ENCODE measurements at regions of chr3 and their contacts with region 1.

Region 1: DNA sequence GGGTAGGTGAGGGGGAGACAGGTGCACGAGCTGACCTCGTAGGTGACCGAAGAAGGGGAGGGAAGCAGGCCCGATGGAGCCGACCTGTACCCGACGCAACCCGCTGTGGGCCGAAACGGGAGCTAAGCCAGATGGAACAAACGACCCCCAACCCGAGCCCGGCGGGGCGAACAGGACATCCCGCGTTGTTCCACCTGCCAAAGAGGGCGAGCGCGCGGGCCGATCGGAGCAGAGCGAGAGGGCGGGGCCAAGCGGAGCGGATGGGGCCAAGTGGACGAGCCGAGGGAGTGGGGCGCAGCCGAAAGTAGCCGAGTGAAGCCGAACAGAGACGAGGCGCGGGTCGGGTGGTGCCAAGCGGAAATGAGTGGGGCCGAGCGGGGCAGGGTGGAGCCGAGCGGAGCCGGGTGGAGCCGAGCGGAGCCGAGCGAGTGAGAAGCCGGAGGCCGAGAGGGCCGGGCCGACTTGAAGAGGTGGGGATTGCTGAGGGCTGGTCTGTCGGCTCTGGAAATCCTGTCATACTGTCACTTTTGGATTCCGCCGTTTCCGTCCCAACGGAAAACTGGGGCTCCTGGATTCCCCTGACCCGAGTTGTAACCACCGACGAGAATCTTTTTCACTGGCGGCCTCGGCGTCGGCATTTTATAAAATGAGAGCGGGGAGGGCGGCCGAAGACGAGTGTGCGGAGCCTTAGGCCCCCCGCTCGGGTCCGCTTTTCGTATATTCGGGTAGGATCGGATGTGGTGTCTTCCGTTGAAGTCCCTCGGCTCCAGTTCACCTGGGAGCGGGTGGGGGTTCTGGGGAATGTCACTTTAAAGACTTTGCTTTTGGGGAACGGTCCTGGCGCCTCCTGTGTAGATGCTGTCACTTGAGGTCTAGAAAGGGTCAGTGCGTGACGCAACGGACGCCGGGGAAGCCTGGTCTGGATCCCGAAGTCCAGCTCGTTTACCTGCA is 15.6 kb upstream of the WNT7A start:
- DNase-seq: peak; percentile 88 to 96 (median 92)
- ATAC-seq: peak; percentile 96
- H3K4me3 Mint-ChIP-seq: peak overlapping the region; percentile 82 to 95 (median 92)
- H3K27ac Mint-ChIP-seq: peak overlapping the region; percentile 85 to 97 (median 94)
- H3K4me1 Mint-ChIP-seq: peaks cover 21 to 38% (median 33%) of the 10 kb centered on the region in 4 donors
- H3K27me3 Mint-ChIP-seq: peaks cover 0 to 2% (median 0%) of the 10 kb centered on the region in 5 donors

Region 2: DNA sequence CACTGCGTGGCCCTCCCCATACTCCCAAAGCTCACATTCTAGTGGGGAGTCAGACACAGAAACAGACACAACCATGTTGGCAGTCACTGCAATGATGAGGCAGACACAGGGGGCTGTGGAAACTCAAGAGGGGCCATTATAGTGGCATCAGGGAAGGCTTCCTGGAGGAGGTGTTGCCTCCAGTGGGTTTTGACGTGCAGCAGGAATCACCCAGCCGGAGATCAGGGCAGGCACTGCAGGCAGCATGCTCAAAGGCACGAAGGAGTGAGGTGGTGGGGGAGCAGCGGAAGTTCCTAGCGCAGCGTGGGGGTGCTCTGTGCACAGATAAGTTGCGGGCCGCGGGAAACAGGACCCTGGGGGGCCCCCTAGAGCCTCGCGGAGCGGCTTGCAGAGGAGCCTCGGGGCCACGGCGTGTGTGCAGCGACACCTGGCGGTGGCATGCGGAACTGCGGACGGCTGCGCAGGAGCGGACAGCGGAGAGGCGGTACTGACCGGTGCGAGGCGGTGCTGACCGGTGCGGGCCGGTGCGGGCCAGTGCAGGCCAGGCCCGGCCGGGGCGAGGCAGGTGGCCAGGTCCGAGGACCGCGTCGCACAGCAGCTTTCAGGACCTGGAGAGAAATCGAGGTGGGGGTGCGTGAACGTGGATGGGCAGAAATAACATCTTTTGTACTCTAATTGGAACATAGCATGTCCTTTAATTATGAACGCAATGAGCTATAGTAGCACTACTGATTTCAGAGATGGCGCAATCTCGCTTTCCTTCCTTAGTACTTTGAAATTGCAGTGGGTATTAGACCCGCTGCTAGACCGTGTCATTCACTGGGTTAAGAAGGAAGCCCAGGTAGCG is 245.0 kb before region 1 on chr3:
- POLR2A ChIA-PET with region 1: interaction called, 10 read pairs
- DNase-seq: peak; percentile 78 to 93 (median 86)
- ATAC-seq: peak; percentile 89 to 92
- H3K4me3 Mint-ChIP-seq: peak overlapping the region; percentile 21 to 79 (median 63)
- H3K27ac Mint-ChIP-seq: peak overlapping the region; percentile 9 to 89 (median 68)
- H3K4me1 Mint-ChIP-seq: peaks cover 30 to 62% (median 49%) of the 10 kb centered on the region in 4 donors
- H3K27me3 Mint-ChIP-seq: peaks cover 10 to 22% (median 16%) of the 10 kb centered on the region in 5 donors

Region 3: GRCh38 chr3:13866041-13866965 is 29.1 kb before region 1 on chr3:
- POLR2A ChIA-PET with region 1: interaction called, 11 read pairs
- DNase-seq: peak; percentile 26 to 87 (median 67)
- ATAC-seq: peak; percentile 86 to 91
- H3K4me3 Mint-ChIP-seq: peak overlapping the region; percentile 65 to 82 (median 78)
- H3K27ac Mint-ChIP-seq: peak overlapping the region; percentile 81 to 99 (median 95)
- H3K4me1 Mint-ChIP-seq: peaks cover 30 to 72% (median 53%) of the 10 kb centered on the region in 4 donors
- H3K27me3 Mint-ChIP-seq: peaks cover 0 to 5% (median 0%) of the 10 kb centered on the region in 5 donors

Region 4: DNA sequence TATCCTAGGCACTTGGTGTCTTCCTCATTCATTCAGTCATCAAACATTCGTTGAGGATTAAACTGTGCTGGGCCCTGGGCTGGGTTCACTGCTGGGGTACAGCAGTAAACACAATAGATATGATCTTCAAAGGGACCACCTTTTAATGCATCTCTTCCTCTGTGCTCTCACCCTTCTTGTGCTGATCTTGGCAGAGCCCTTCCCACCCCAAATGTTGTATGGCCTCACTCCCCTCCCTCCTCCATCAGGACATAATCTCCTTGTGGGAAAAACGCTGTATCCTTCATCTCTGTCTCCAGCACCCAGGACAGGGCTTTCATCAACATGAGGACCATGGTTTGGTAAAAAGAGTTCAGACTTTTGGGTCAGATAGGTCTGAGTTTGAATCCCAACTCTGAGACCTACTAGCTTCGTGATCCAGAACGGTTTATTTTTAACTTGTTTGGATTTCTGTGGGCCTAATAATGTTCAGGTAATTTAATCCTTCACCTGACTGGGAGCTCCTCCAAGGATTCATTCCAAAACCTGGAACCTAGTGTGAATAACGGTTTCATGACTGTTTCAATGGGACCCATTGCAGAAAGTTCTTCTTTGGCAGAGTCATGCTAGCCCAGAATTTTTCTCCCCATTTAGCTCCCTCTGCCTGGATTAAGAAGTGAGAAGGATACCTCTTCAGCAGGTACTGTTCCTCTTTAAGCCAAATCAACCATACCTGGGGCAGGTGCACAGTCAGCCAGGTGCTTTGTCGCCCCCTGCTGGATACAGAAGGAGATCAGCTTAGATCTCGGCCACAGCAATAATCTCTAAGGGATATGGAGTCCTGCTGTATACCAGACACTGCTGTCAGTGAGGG is 10.4 kb before region 1 on chr3:
- POLR2A ChIA-PET with region 1: interaction called, 47 read pairs
- DNase-seq: peak; percentile 54 to 86 (median 72)
- ATAC-seq: peak; percentile 77 to 84
- H3K4me3 Mint-ChIP-seq: no peak overlapping the region
- H3K27ac Mint-ChIP-seq: peak overlapping the region in 2 of 10 donors; percentile 25 to 77
- H3K4me1 Mint-ChIP-seq: peaks cover 3 to 21% (median 12%) of the 10 kb centered on the region in 4 donors
- H3K27me3 Mint-ChIP-seq: peaks cover 10 to 49% (median 24%) of the 10 kb centered on the region in 5 donors

Region 5: DNA sequence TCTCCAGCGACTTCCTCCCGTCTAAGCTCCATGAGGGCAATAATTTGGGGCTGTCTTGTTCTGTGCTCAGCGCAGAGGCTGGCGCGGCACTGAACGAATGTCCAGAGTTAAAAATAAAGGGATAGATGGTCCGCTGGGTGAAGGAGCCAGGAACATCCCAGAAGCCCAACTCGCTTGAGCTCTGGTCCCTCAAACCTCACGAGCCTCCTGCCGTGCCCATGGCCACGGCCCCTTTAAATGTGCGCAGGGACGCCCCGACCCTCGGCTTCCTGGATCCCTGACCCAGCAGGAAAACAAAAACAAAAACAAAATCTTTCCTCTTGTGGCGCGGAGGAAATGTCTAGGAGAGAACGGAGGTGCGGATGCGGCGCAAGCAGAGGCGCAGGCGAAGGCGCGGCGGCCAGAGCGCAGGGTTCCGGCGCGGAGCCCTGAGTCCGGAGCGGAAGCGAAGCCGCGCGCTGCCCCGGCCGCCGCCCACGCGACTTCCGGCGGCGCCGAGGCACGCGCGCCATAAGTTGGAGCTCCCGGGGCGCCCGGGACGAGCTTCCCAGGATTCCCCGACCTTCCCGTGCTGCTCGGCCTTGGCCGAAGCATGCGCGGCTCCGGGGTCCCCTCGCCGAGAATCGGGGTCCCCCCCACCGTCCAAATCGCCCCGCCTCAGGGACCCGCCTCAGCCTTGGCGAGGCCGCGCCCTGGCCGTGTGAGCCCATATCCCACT is 37.3 kb after region 1 on chr3:
- POLR2A ChIA-PET with region 1: no interaction called
- DNase-seq: no peak
- ATAC-seq: peak in 1 of 2 donors; percentile 46
- H3K4me3 Mint-ChIP-seq: peak overlapping the region; percentile 55 to 86 (median 75)
- H3K27ac Mint-ChIP-seq: peak overlapping the region in 3 of 10 donors; percentile 37 to 80 (median 75)
- H3K4me1 Mint-ChIP-seq: peaks cover 3 to 5% (median 4%) of the 10 kb centered on the region in 4 donors
- H3K27me3 Mint-ChIP-seq: peaks cover 8 to 53% (median 28%) of the 10 kb centered on the region in 5 donors

Region 6: GRCh38 chr3:14124615-14125190 is 229.3 kb after region 1 on chr3 and contains the starts of genes CHCHD4 and TMEM43:
- POLR2A ChIA-PET with region 1: interaction called, 15 read pairs
- DNase-seq: peak; percentile 96 to 100 (median 98)
- ATAC-seq: peak; percentile 88 to 92
- H3K4me3 Mint-ChIP-seq: peak within 1 kb of the TSS; percentile 92 to 97 (median 95)
- H3K27ac Mint-ChIP-seq: peak within 1 kb of the TSS; percentile 87 to 98 (median 96)
- H3K4me1 Mint-ChIP-seq: peaks cover 37 to 76% (median 64%) of the 10 kb centered on the region in 4 donors
- H3K27me3 Mint-ChIP-seq: no peaks in the 10 kb centered on the region
- polyA plus RNA-seq, gene CHCHD4: 6.8 to 15.8 (median 11.5) TPM
- polyA plus RNA-seq, gene TMEM43: 45.6 to 65.0 (median 56.0) TPM

Region 7: DNA sequence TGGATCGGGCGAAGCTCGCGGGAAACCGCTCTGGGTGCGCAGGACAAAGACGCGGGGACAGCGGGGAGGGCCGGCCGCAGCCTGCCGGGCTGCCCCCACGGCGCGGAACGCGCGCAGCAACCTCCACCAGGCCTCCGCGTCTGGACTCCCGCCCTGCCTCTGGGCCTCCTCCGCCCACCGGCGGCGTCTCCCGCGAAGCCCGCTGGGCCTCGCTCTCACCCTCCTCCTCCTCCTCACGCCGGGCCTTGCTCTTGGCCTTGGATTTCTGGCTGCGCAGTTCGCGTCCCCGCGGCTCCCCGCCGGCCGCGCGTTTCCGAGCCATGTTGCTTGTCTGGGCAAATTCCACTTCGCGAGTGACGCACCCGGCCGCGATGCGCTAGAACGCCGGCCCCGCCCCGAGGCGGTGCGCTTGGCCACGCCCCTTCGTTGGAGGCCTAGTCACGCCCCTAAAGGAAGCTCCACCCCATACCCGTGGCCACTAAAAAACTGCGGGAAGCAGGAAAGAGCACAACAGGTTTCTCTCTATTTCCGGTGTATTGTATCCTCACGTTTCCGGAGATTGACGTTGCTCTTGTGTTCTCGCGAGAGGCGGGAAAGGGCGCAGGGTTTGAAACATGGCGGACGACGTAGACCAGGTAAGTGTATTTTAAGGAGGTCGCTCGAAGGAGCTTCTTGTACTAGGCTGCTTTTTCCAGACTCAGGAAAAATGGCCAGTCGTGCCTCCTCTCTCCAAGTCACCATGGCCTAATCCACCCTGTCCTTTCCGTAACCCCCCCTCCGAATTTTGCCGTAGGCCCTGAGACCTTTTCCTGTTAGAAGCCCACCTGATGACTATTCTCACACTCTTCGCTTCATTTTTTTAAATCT is 283.1 kb after region 1 on chr3 and contains the starts of genes LSM3 and XPC:
- POLR2A ChIA-PET with region 1: interaction called, 13 read pairs
- DNase-seq: peak; percentile 97 to 100 (median 98)
- ATAC-seq: peak; percentile 85 to 88
- H3K4me3 Mint-ChIP-seq: peak within 1 kb of the TSS; percentile 88 to 100 (median 98)
- H3K27ac Mint-ChIP-seq: peak within 1 kb of the TSS; percentile 97 to 100 (median 100)
- H3K4me1 Mint-ChIP-seq: peaks cover 32 to 75% (median 74%) of the 10 kb centered on the region in 4 donors
- H3K27me3 Mint-ChIP-seq: no peaks in the 10 kb centered on the region
- polyA plus RNA-seq, gene LSM3: 20.8 to 26.5 (median 24.8) TPM
- polyA plus RNA-seq, gene XPC: 28.5 to 49.6 (median 49.4) TPM

Measured in naive thymus-derived CD8-positive, alpha-beta T cell (primary cell).